Motor neuron (in vitro differentiated cells): ENCODE measurements at regions of chr12 and their contacts with region 1.

Region 1: DNA sequence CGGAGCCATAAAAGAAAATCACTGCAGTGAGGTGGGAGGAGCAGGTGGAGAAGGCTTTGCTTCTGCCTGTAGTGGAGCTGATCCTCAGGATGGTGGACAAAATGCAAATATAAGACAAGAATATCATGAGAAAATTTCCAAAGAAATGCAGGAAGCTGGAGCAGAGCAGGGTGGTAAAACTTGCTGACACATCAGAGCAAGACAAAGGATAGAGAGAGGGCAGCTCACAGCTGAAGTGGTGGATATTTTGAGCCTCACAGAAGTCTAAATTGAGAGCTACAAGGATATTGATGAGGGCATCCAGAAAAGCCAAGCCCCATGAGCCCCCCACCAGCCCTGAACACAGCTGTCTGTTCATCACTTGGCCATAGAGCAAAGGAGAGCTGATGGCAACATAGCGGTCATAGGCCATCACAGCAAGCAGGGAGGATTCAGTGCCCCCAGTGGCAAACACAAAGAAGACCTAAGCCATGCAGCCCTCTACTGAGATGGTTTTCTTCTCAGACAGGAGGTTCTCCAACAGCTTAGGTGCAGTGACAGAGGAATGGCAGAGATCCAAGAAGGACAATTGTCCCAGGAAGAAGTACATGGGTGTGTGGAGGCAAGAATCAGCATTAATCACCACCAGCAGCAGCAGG is 30.0 kb upstream of the ANP32D start:
- ATAC-seq: peak in 2 of 8 experiments; percentile 31 to 55
- H3K4me3 ChIP-seq: no peak overlapping the region
- H3K27ac ChIP-seq: no peak overlapping the region
- H3K4me1 ChIP-seq: no peaks in the 10 kb centered on the region

Region 2: GRCh38 chr12:48263617-48264016 is 178.7 kb before region 1 on chr12:
- in situ Hi-C with region 1: loop called in 1 of 9 experiments (anchors 25 kb)
- ATAC-seq: no peak
- H3K4me3 ChIP-seq: no peak overlapping the region
- H3K27ac ChIP-seq: no peak overlapping the region
- H3K4me1 ChIP-seq: no peaks in the 10 kb centered on the region